Motor neuron (in vitro differentiated cells): ENCODE measurements at regions of chr14 and their contacts with region 1.

Region 1: GRCh38 chr14:54169254-54169924 is 212.8 kb upstream of the BMP4 start:
- ATAC-seq: no peak
- H3K4me3 ChIP-seq: no peak overlapping the region
- H3K27ac ChIP-seq: no peak overlapping the region
- H3K4me1 ChIP-seq: no peaks in the 10 kb centered on the region

Region 2: DNA sequence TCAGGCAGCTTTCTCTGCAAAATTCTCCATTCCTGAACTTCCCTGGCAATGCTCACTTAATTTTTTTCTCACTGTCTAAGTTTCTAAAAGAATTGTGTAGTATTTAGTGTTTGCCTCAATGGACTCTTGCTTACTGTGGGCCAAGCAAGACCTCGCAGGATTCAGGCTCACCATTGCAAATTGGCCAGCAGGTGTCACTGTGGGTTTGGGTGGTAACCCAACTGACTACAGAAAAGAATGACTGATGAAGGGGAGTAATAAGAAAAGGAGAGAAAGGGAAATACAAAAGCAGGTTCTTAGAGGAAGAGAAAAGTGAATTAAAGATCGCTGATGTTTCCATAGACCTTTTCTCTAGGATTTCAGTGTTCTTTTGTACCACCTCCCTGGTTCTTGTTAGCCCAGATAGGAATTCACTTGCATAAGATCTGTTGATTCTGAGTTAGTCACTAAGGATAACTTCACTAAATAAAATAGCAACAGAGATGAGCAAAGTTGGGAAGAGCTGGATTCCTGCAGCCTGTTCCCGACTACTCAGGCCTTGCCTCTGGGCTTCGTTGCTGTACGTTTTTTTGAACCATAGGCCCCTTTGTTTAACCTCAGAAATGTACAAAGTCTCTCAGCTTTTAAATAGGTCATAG is 629.8 kb before region 1 on chr14:
- in situ Hi-C with region 1: loop called in 3 of 9 experiments (anchors 25 kb)
- ATAC-seq: peak; percentile 58 to 92 (median 78)
- H3K4me3 ChIP-seq: no peak overlapping the region
- H3K27ac ChIP-seq: no peak overlapping the region
- H3K4me1 ChIP-seq: peaks cover 6% of the 10 kb centered on the region in 2 donors

Region 3: GRCh38 chr14:53953002-53953827 is 216.2 kb before region 1 on chr14:
- in situ Hi-C with region 1: loop called in 1 of 9 experiments (anchors 25 kb)
- ATAC-seq: peak; percentile 61 to 90 (median 88)
- H3K4me3 ChIP-seq: peak overlapping the region; percentile 37 to 53 (median 44)
- H3K27ac ChIP-seq: no peak overlapping the region
- H3K4me1 ChIP-seq: peaks cover 0 to 9% of the 10 kb centered on the region in 2 donors